ENCODE measurements at regions of chr19 and their contacts with region 1.

Region 1: DNA sequence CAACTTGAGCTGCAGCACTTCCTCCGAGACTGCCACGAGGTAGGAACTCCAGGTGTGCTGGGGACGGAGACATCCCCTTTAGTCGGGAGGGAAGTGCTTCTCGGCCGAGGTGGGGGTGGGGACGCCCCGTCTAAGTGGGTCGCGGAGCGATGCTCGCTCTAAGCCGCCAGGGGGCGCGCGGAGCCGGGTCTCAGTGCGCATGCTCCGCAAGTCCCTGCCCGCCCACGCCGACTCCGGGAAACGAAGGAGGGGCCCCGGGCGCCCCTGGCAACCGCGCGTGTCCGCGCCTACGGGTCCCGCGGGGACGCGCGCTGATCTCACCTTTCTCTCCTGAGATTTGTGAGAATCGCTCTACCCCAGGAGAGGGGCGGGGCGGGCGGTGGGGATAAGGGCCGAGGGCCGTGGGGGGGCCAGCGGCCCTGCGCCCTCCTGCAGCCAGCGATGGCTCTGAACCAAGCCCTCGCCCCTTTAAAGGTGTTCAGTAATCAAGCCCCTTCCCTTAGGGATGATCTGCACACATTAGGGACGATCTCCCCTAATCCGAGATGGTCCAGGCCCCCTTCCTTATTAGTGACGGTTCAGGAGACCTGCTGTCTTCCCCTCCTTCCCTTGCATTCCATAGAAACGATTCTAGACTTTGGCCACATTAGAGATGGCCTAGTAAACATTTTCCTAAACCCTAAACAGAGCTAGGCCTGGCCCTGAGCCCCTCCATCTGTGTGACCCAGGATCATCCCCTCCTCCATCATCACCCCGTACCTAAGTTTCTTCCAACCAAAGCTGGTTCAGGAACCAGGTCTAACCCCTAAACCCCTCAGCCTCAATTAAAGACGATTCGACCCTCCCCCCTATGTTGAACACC is 47.3 kb upstream of the SHKBP1 start:
- DNase-seq: peak; percentile 88 to 90 (median 89)
- H3K4me3 ChIP-seq: peak overlapping the region in 1 of 2 donors; percentile 54
- H3K4me3 Mint-ChIP-seq: peak overlapping the region; percentile 65 to 87 (median 78)
- H3K27ac ChIP-seq: no peak overlapping the region
- H3K27ac Mint-ChIP-seq: peak overlapping the region; percentile 53 to 93 (median 77)
- H3K4me1 ChIP-seq: peaks cover 14% of the 10 kb centered on the region
- H3K4me1 Mint-ChIP-seq: peaks cover 9 to 26% (median 15%) of the 10 kb centered on the region in 4 donors
- H3K27me3 ChIP-seq: peaks cover 9% of the 10 kb centered on the region
- H3K27me3 Mint-ChIP-seq: peaks cover 18 to 30% of the 10 kb centered on the region in 2 donors

Region 2: DNA sequence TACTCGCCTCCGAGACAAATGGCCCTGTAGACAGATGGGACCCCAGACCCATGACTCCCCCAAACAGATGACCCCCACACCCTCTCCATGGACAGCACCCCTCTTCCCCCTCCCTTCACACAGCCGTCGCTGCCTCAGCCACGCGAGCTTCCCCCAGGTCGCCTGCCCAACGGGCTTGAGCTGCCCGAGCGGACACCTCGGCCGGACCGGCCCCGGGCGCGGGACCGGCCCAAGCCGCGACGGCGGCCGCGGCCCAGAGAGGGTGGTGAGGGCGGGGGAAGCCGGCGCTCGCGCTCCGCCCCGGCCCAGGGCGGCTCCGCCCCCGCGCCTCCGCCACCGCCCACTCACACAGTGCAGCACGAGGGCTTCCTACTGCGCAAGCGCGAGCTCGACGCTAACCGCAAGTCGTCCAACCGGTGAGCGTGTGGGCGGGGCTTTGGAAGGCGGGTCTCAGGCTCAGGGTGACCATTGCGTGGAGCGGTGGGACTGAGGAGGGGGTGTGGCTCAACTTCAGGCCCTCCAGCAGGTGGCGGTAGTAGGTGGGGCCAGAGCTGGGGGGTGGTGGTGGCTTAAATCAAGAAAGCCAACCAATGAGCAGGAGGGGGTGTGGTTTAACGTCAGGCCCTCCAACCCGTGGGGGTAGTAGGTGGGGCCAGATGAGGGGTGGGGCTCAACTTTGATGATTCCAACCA is 41.1 kb after region 1 on chr19:
- CTCF ChIA-PET with region 1: no interaction called
- POLR2A ChIA-PET with region 1: no interaction called
- intact Hi-C with region 1: loop called (anchors 1 kb)
- DNase-seq: peak; percentile 95 to 98 (median 98)
- H3K4me3 ChIP-seq: peak overlapping the region; percentile 17 to 61
- H3K4me3 Mint-ChIP-seq: peak overlapping the region; percentile 65 to 88 (median 82)
- H3K27ac ChIP-seq: no peak overlapping the region
- H3K27ac Mint-ChIP-seq: peak overlapping the region; percentile 30 to 94 (median 91)
- H3K4me1 ChIP-seq: peaks cover 14% of the 10 kb centered on the region
- H3K4me1 Mint-ChIP-seq: peaks cover 8 to 26% (median 16%) of the 10 kb centered on the region in 4 donors
- H3K27me3 ChIP-seq: no peaks in the 10 kb centered on the region
- H3K27me3 Mint-ChIP-seq: peaks cover 5 to 7% of the 10 kb centered on the region in 2 donors

Region 3: DNA sequence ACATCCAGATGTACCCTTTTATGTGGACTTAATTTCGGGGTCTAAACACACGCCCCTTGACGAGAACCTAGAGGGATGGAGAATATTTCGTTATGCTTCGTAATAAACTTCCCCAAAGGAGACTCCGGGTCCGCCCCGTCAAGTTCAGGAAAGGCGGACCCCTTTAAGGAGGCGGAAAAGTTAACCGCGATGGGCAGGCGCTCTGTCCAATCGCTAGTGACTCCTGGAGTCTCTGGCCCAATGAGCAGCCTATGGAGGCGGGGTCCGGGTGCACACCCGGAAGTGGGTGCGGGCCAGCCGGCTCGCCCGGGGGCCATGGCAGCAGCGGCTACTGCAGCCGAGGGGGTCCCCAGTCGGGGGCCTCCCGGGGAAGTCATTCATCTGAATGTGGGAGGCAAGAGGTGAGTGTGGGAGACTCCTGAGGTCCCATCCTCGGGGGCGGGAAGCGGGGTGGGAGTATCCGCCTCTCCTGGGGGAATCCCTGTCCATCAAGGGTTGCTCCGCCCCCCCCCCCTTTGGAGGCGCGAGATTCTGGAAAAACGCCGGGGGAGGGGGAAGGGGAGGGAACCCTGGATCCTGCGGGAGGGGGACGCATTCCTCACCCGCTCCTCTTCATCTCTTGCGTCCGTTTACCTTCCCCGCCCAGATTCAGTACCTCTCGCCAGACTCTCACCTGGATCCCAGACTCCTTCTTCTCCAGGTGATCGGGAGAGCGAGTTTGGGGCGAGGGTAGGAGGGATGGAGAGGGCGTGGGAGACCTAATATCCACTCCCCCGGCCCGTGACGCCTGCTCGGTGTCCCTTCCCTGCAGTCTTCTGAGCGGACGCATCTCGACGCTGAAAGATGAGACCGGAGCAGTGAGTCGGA is 47.5 kb after region 1 on chr19 and contains the start of gene SHKBP1:
- CTCF ChIA-PET with region 1: no interaction called
- POLR2A ChIA-PET with region 1: no interaction called
- intact Hi-C with region 1: loop called (anchors 1 kb)
- DNase-seq: peak; percentile 91 to 94 (median 92)
- H3K4me3 ChIP-seq: peak within 1 kb of the TSS; percentile 73 to 74
- H3K4me3 Mint-ChIP-seq: peak within 1 kb of the TSS; percentile 83 to 94 (median 91)
- H3K27ac ChIP-seq: peak within 1 kb of the TSS; percentile 72
- H3K27ac Mint-ChIP-seq: peak within 1 kb of the TSS; percentile 87 to 96 (median 91)
- H3K4me1 ChIP-seq: peaks cover 23% of the 10 kb centered on the region
- H3K4me1 Mint-ChIP-seq: peaks cover 14 to 31% (median 23%) of the 10 kb centered on the region in 4 donors
- H3K27me3 ChIP-seq: no peaks in the 10 kb centered on the region
- H3K27me3 Mint-ChIP-seq: no peaks in the 10 kb centered on the region
- total RNA-seq, gene SHKBP1: 167 to 170 TPM

Region 4: GRCh38 chr19:40598121-40598917 is 69.0 kb after region 1 on chr19:
- CTCF ChIA-PET with region 1: interaction called, 3 read pairs
- POLR2A ChIA-PET with region 1: no interaction called
- intact Hi-C with region 1: loop called (anchors 1 kb)
- DNase-seq: peak; percentile 76 to 83 (median 78)
- H3K4me3 ChIP-seq: no peak overlapping the region
- H3K4me3 Mint-ChIP-seq: peak overlapping the region in 4 of 8 donors; percentile 45 to 58 (median 55)
- H3K27ac ChIP-seq: no peak overlapping the region
- H3K27ac Mint-ChIP-seq: peak overlapping the region in 3 of 7 donors; percentile 28 to 68 (median 42)
- H3K4me1 ChIP-seq: peaks cover 64% of the 10 kb centered on the region
- H3K4me1 Mint-ChIP-seq: peaks cover 34 to 63% (median 47%) of the 10 kb centered on the region in 4 donors
- H3K27me3 ChIP-seq: peaks cover 26% of the 10 kb centered on the region
- H3K27me3 Mint-ChIP-seq: peaks cover 19 to 29% of the 10 kb centered on the region in 2 donors